ENCODE measurements at regions of chr6 and their contacts with region 1.

Region 1: GRCh38 chr6:89371849-89372505 is 19.5 kb upstream of the UBE2J1 start:
- DNase-seq: peak; percentile 75
- H3K4me3 Mint-ChIP-seq: peak overlapping the region; percentile 49
- H3K27ac Mint-ChIP-seq: peak overlapping the region; percentile 59
- H3K4me1 Mint-ChIP-seq: peaks cover 46% of the 10 kb centered on the region
- H3K27me3 Mint-ChIP-seq: no peaks in the 10 kb centered on the region

Region 2: GRCh38 chr6:89122625-89123024 is 249.4 kb before region 1 on chr6:
- intact Hi-C with region 1: loop called (anchors 2 kb)
- DNase-seq: no peak
- H3K4me3 Mint-ChIP-seq: no peak overlapping the region
- H3K27ac Mint-ChIP-seq: no peak overlapping the region
- H3K4me1 Mint-ChIP-seq: no peaks in the 10 kb centered on the region
- H3K27me3 Mint-ChIP-seq: peaks cover 29% of the 10 kb centered on the region

Region 3: GRCh38 chr6:89352278-89353117 is 19.5 kb before region 1 on chr6 and contains the start of gene UBE2J1:
- intact Hi-C with region 1: loop called (anchors 1 kb)
- DNase-seq: peak; percentile 75
- H3K4me3 Mint-ChIP-seq: peak within 1 kb of the TSS; percentile 96
- H3K27ac Mint-ChIP-seq: peak within 1 kb of the TSS; percentile 96
- H3K4me1 Mint-ChIP-seq: peaks cover 82% of the 10 kb centered on the region
- H3K27me3 Mint-ChIP-seq: no peaks in the 10 kb centered on the region
- total RNA-seq, gene UBE2J1: 38.1 and 40.5 TPM in 2 replicates

Region 4: DNA sequence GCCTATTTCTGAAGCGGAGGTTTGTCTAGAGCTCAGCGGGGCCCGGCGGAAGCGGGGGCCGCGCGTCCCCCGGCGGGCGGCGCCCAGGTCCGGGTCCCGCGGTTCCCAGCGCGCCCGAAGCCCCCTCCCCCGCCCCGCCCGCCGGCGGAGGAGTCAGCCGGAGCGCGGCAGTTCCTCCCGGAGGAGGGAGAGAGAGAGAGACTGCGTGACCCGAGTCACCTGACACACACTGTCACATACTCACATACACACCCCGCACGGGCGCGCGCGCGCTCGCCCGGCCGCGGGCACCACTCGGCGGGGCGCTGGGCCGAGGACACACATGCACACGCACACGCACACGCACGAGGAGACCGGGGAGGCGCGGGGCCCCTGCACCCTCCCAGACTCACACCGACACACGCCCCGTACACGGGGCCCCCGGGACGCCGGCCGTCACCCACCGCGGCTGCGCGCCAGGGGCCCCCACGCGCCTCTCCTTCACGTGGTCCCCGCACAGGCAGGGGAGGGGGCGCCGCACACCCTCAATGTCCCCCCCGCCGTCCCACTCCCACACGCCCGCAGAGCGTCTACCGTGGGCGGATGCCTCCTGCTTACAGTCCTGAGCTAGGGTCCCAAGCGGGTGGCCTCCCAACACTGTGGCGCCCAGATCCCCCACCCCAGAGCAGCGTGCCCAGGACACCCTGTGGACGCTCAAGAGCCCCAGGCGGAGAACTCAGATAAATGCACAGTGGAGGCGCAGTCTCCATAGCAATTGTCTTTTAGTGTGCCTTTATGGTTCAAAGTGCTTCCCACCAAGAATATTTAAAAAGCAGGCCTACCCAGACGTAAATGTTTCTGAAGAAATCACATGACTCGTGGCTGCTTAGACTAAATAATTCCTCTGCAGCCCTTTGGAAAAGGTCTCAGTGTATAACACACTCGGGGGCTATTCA is 40.4 kb after region 1 on chr6 and contains the start of gene RRAGD:
- intact Hi-C with region 1: loop called (anchors 1 kb)
- DNase-seq: peak; percentile 49
- H3K4me3 Mint-ChIP-seq: peak within 1 kb of the TSS; percentile 95
- H3K27ac Mint-ChIP-seq: peak within 1 kb of the TSS; percentile 94
- H3K4me1 Mint-ChIP-seq: peaks cover 25% of the 10 kb centered on the region
- H3K27me3 Mint-ChIP-seq: peaks cover 50% of the 10 kb centered on the region
- total RNA-seq, gene RRAGD: 7.8 and 10.1 TPM in 2 replicates

Region 5: DNA sequence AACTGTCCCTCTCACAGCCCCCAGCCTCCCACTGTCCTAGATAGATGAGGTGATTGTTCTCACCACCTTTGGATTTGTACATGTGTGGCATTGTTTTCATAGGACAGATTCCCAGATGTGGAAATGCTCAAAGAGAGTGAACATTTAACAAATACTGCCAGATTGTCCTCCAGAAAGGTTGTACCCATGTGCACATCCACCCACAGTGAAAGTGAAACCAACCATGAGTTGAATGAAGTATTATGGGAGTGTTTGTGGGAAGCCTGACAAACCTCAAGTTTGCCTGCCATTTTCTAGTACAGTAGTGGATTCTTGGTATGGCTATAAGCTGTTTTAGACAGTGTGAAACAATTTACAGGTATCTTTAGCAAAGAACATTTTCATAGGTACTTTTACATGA is 103.7 kb after region 1 on chr6:
- intact Hi-C with region 1: loop called (anchors 2 kb)
- DNase-seq: peak; percentile 38
- H3K4me3 Mint-ChIP-seq: peak overlapping the region; percentile 5
- H3K27ac Mint-ChIP-seq: peak overlapping the region; percentile 37
- H3K4me1 Mint-ChIP-seq: peaks cover 27% of the 10 kb centered on the region
- H3K27me3 Mint-ChIP-seq: peaks cover 3% of the 10 kb centered on the region

Region 6: GRCh38 chr6:89610149-89610642 is 238.2 kb after region 1 on chr6:
- intact Hi-C with region 1: loop called (anchors 1 kb)
- DNase-seq: peak; percentile 65
- H3K4me3 Mint-ChIP-seq: no peak overlapping the region
- H3K27ac Mint-ChIP-seq: no peak overlapping the region
- H3K4me1 Mint-ChIP-seq: peaks cover 15% of the 10 kb centered on the region
- H3K27me3 Mint-ChIP-seq: peaks cover 2% of the 10 kb centered on the region

Region 7: GRCh38 chr6:89840538-89840937 is 468.6 kb after region 1 on chr6:
- intact Hi-C with region 1: no loop called
- DNase-seq: no peak
- H3K4me3 Mint-ChIP-seq: no peak overlapping the region
- H3K27ac Mint-ChIP-seq: peak overlapping the region; percentile 40
- H3K4me1 Mint-ChIP-seq: peaks cover 44% of the 10 kb centered on the region
- H3K27me3 Mint-ChIP-seq: no peaks in the 10 kb centered on the region

Region 8: DNA sequence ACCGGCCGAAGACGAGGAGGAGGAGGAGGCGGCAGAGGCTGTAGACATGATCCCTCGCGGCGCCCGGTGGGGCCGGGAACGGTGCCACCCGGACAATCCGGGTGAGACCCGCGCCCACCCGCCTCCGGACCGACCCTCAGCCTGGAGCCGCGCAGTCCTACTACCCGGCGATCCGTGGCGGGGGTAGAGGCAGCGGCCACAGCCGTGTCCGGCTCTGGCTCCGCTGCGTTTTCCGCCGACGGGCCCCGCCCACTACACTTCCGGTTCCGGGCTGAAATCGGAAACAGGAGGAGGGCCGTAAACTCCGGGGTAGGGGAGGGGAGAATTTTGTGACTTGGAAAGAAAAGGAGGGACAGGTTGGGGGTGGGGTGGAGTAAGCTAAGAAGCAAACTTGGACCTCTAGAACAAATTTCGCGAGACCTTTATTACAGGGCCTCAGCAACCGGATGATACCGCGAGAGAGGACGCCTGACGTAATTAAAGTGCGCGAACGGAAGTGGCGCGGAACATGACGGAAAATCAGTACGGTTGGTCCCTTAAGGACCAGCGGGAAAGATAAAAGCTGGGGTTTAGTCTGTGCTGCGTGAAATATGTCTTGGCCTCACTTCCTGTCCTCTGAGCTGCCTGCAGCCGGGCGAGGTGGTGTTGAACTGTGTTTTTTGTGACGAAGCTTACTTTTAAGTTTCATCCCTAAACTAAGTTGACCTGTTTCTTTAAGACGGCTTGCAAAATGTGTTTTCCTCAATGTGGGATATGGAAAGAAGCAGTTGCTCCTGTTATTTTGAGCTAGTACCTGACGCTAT is 1215.1 kb after region 1 on chr6 and contains the start of gene MAP3K7:
- intact Hi-C with region 1: loop called (anchors 10 kb)
- DNase-seq: peak; percentile 92
- H3K4me3 Mint-ChIP-seq: peak within 1 kb of the TSS; percentile 93
- H3K27ac Mint-ChIP-seq: peak within 1 kb of the TSS; percentile 96
- H3K4me1 Mint-ChIP-seq: peaks cover 39% of the 10 kb centered on the region
- H3K27me3 Mint-ChIP-seq: peaks cover 8% of the 10 kb centered on the region
- total RNA-seq, gene MAP3K7: 31.0 and 35.9 TPM in 2 replicates

Measured in activated T-helper 1 cell treated with anti-CD3 and anti-CD28 coated beads, Interleukin-12 subunit alpha, Interleukin-12 subunit beta, Interleukin-2, Interleukin-4 antibody, amounts not matched to agents 30 ng/mL and 10 ng/mL and 1 ng/mL, durations not matched to agents 14 hours and 24 hours and 36 hours (primary cell).